ENCODE measurements at regions of chr2 and their contacts with region 1.

Region 1: DNA sequence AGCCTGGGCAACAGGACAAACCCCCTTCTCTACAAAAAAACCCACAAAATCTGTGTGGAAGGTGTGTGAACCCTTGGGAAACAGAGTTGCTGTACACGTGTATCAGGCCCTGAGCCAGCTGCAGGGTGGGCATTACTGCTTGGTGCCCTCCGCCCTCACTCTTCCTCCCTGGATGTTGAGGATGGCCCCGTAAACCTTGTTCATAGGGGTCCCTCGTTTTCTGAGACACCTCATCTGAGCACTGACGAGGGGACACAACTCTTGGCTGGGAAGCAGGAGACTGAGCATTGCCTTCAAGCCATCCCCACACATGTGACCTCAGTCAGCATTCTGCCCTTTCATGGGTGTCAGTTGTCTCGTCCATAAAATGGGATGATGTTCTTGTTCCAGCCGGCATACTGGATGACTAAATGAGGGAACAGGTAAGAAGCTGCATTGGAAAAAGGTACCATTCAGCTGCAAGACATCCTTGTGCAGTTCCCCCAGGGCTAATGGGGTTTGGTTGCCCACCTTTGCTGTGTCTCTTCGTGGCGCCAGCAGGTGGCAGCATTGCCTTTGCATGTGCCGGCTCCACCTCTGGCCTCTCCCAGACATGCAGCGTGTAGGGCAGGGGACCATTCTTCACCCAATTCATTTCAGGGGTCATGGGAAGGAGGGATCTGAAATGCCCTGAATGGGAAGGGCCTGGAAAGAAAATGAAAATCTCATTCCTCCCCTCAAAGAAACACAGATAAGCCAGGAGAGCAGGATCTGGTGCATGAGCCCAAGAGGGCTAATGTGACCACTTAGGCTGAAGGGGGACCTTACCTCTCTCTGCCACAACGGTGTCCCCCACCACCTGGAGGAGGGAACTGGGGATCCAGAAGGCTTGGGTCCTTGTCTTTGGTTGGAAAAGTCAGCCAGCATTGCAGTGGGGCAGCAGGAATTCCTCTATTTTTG is 36.4 kb upstream of the HAAO start:
- DNase-seq: peak; percentile 63
- ATAC-seq: peak; percentile 85
- H3K4me3 ChIP-seq: no peak overlapping the region
- H3K27ac ChIP-seq: no peak overlapping the region
- H3K4me1 ChIP-seq: peaks cover 2% of the 10 kb centered on the region; the same call in 1 of the 2 replicates
- H3K27me3 ChIP-seq: no peaks in the 10 kb centered on the region
- CTCF ChIP-seq: peak; percentile 84
- POLR2A ChIP-seq: no peak
- RAD21 ChIP-seq: peak; percentile 88

Region 2: GRCh38 chr2:42494355-42495233 is 334.2 kb before region 1 on chr2:
- CTCF ChIA-PET with region 1: no interaction called
- POLR2A ChIA-PET with region 1: no interaction called
- dilution Hi-C with region 1: no loop called
- in situ Hi-C with region 1: no loop called
- intact Hi-C with region 1: loop called (anchors 10 kb)
- DNase-seq: peak; percentile 75
- ATAC-seq: peak; percentile 72
- H3K4me3 ChIP-seq: peak overlapping the region; percentile 31
- H3K27ac ChIP-seq: no peak overlapping the region
- H3K4me1 ChIP-seq: no peaks in the 10 kb centered on the region
- H3K27me3 ChIP-seq: peaks cover 52% of the 10 kb centered on the region
- CTCF ChIP-seq: peak; percentile 86
- POLR2A ChIP-seq: no peak
- RAD21 ChIP-seq: peak; percentile 76

Region 3: GRCh38 chr2:42770288-42771131 is 58.2 kb before region 1 on chr2:
- CTCF ChIA-PET with region 1: no interaction called
- POLR2A ChIA-PET with region 1: no interaction called
- dilution Hi-C with region 1: no loop called
- in situ Hi-C with region 1: no loop called
- intact Hi-C with region 1: no loop called
- DNase-seq: peak; percentile 37
- ATAC-seq: peak; percentile 80; the same call in 1 of the 2 replicates
- H3K4me3 ChIP-seq: no peak overlapping the region
- H3K27ac ChIP-seq: no peak overlapping the region
- H3K4me1 ChIP-seq: no peaks in the 10 kb centered on the region
- H3K27me3 ChIP-seq: no peaks in the 10 kb centered on the region
- CTCF ChIP-seq: peak; percentile 37
- POLR2A ChIP-seq: no peak
- RAD21 ChIP-seq: peak; percentile 32; the same call in 1 of the 2 replicates

Region 4: DNA sequence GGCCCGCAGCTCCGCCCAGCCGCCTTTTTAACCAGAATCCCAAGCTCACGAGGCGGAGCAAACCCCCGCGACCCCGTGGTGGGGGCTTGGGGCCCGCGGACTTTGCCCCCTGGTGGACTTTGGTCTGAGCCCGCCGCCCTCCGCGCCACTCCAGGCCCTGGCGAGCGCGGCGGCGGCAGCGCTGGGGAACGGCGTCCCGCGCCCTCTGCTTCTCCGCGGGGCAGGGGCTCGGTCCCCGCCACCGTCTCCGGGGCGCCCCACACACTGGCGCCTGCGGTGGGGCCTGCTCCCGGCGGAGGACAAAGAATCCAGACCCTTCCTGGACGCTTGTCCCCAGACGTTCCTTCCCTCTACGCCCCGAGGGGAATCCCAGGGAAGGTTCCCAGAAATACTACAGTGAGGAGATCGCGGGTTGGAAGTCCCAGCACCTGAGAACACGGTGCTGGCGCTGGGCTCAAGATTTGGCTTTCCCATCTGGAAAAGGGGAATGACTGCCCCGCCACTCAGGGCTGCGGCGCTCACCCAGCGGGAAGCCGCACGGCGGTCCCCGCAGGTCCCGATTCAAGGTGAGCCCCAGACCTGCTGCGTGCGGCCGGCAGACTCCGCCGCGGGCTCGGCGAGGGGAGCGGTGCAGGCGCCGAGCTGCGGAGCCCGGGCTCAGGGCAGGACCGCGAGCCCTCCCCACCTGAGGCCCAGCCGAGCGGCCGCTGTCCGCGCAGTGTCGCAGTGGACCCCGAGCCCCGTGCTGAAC is 36.0 kb before region 1 on chr2 and contains the start of gene HAAO:
- CTCF ChIA-PET with region 1: no interaction called
- POLR2A ChIA-PET with region 1: no interaction called
- dilution Hi-C with region 1: no loop called
- in situ Hi-C with region 1: no loop called
- intact Hi-C with region 1: no loop called
- DNase-seq: no peak
- ATAC-seq: 0 out of 2 replicates have a peak, but pooled peaks have one; percentile 5
- H3K4me3 ChIP-seq: no peak within 1 kb of the TSS; the same call in 1 of the 2 replicates
- H3K27ac ChIP-seq: no peak within 1 kb of the TSS
- H3K4me1 ChIP-seq: peaks cover 6% of the 10 kb centered on the region
- H3K27me3 ChIP-seq: peaks cover 28% of the 10 kb centered on the region
- CTCF ChIP-seq: no peak
- POLR2A ChIP-seq: no peak
- RAD21 ChIP-seq: no peak
- total RNA-seq, gene HAAO: 0.18 TPM in 1 of 2 replicates, not detected in the other

Region 5: DNA sequence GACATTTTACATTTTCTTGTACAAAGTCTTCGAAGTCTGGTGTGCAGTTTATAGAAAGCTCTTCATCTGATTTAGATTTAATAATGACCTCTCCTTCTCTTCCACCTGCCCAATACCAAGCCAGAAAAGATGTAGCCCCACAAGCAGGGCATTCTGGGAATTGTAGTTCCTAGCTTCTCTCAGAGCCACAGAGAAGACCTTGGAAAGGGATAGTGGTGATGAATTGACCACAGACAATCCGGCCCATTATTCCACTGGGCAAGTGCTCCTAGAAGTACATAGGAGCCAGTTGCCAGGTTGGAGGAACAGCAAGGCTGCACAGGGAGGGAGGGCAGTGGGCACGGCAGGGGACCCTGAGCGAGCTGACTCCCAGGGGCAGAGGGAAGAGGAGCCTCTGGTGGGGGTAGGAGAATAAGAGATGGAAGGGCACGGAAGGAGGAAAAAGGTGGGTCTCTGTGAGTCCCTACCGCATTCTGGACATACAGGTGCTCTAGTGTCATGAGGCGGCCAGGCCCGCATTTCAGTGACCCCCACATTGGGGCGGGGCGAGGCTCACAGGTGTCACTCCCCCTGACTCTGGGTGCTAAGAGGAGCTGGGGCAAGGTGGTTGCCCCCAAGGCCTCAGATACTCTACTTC is 116.1 kb after region 1 on chr2:
- CTCF ChIA-PET with region 1: no interaction called
- POLR2A ChIA-PET with region 1: no interaction called
- dilution Hi-C with region 1: no loop called
- in situ Hi-C with region 1: no loop called
- intact Hi-C with region 1: loop called (anchors 2 kb)
- DNase-seq: peak; percentile 57
- ATAC-seq: peak; percentile 46; the same call in 1 of the 2 replicates
- H3K4me3 ChIP-seq: no peak overlapping the region
- H3K27ac ChIP-seq: no peak overlapping the region
- H3K4me1 ChIP-seq: no peaks in the 10 kb centered on the region; the same call in 1 of the 2 replicates
- H3K27me3 ChIP-seq: no peaks in the 10 kb centered on the region
- CTCF ChIP-seq: no peak
- POLR2A ChIP-seq: no peak
- RAD21 ChIP-seq: no peak

Region 6: DNA sequence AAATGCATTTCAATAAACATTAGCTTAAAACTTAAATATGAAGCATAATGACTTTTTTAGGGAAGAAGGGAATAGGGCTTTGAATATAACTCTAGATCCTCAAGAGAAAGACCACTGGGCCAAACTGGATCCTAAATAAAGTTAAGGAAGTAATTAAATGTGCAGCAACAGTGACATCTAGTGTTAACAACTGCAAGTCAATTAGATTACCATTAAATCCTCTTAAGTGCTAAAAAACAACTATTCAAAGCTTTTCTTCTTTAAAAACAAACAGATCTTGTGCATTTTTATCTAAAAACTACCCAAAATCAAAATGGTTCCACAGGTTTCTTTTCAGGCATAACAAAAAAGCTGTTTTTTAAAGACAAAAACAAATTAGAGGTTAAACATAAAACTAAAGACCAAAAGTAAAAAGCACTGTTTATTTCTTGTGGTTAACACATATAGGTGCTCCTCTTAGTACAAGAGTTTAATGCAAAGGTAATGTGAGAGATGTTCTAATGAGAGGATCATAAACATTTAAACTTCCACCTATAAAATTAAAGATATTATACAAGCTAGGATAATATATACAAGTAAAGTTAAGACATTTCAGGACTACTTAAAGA is 655.7 kb after region 1 on chr2:
- CTCF ChIA-PET with region 1: no interaction called
- POLR2A ChIA-PET with region 1: no interaction called
- dilution Hi-C with region 1: no loop called
- in situ Hi-C with region 1: loop called (anchors 5 kb)
- intact Hi-C with region 1: loop called (anchors 1 kb)
- DNase-seq: peak; percentile 85
- ATAC-seq: peak; percentile 73
- H3K4me3 ChIP-seq: no peak overlapping the region
- H3K27ac ChIP-seq: no peak overlapping the region
- H3K4me1 ChIP-seq: no peaks in the 10 kb centered on the region
- H3K27me3 ChIP-seq: no peaks in the 10 kb centered on the region
- CTCF ChIP-seq: peak; percentile 65
- POLR2A ChIP-seq: no peak
- RAD21 ChIP-seq: peak; percentile 82

Region 7: GRCh38 chr2:43559391-43560230 is 730.9 kb after region 1 on chr2:
- CTCF ChIA-PET with region 1: no interaction called
- POLR2A ChIA-PET with region 1: no interaction called
- dilution Hi-C with region 1: no loop called
- in situ Hi-C with region 1: loop called (anchors 25 kb)
- intact Hi-C with region 1: no loop called
- DNase-seq: no peak
- ATAC-seq: no peak
- H3K4me3 ChIP-seq: no peak overlapping the region
- H3K27ac ChIP-seq: no peak overlapping the region
- H3K4me1 ChIP-seq: no peaks in the 10 kb centered on the region
- H3K27me3 ChIP-seq: no peaks in the 10 kb centered on the region
- CTCF ChIP-seq: no peak
- POLR2A ChIP-seq: no peak
- RAD21 ChIP-seq: no peak

Region 8: GRCh38 chr2:43611987-43612894 is 783.5 kb after region 1 on chr2:
- CTCF ChIA-PET with region 1: no interaction called
- POLR2A ChIA-PET with region 1: no interaction called
- dilution Hi-C with region 1: no loop called
- in situ Hi-C with region 1: no loop called
- intact Hi-C with region 1: loop called (anchors 1 kb)
- DNase-seq: peak; percentile 76
- ATAC-seq: peak; percentile 96
- H3K4me3 ChIP-seq: no peak overlapping the region
- H3K27ac ChIP-seq: no peak overlapping the region
- H3K4me1 ChIP-seq: peaks cover 2% of the 10 kb centered on the region; the same call in 1 of the 2 replicates
- H3K27me3 ChIP-seq: peaks cover 3% of the 10 kb centered on the region; the same call in 1 of the 2 replicates
- CTCF ChIP-seq: peak; percentile 84
- POLR2A ChIP-seq: no peak
- RAD21 ChIP-seq: peak; percentile 78

Measured in IMR-90 (cell line).